Activated naive CD4-positive, alpha-beta T cell treated with anti-CD3 and anti-CD28 coated beads for 36 hours (primary cell): ENCODE measurements at regions of chr4 and their contacts with region 1.

Region 1: GRCh38 chr4:148366251-148366650 is 76.0 kb downstream of the NR3C2 start:
- DNase-seq: no peak
- H3K4me3 Mint-ChIP-seq: no peak overlapping the region
- H3K27ac Mint-ChIP-seq: no peak overlapping the region
- H3K4me1 Mint-ChIP-seq: peaks cover 33% of the 10 kb centered on the region
- H3K27me3 Mint-ChIP-seq: no peaks in the 10 kb centered on the region

Region 2: DNA sequence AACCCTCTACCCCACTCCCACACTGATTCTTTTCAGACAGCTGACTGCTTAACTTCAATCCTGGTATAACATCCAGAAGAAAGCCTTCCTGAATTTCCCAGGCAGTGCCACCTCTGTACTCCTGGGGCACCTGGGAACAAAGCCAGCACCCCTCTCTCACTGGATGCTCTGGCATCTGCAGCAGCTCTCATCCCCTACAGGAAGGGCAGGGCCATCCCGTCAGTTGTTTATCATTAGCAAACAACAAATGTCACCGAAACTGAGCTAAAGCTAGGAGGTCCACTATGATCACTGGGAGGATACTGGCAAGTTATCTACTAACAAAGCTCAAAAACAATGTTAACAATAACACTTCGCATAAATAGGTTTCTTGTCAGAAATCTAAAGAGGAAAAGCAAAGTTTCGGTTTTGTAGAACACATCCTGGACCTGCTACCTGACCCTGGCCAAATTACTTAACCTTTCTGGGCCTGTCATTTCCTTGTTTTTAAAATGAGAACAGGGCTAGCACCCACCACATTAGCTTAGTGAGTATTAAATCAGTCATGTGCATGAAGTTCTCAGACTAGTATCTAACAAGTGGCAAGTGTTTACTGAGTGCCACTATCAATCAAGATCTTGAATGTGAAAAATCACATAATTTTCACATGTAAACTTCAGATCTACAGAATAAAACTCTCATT is 10.7 kb before region 1 on chr4:
- CTCF ChIA-PET with region 1: no interaction called
- intact Hi-C with region 1: loop called (anchors 2 kb)
- DNase-seq: no peak
- H3K4me3 Mint-ChIP-seq: peak overlapping the region; percentile 6
- H3K27ac Mint-ChIP-seq: no peak overlapping the region
- H3K4me1 Mint-ChIP-seq: peaks cover 40% of the 10 kb centered on the region
- H3K27me3 Mint-ChIP-seq: no peaks in the 10 kb centered on the region